Endothelial cell of umbilical vein (primary cell): ENCODE measurements at regions of chr1 and their contacts with region 1.

Region 1: DNA sequence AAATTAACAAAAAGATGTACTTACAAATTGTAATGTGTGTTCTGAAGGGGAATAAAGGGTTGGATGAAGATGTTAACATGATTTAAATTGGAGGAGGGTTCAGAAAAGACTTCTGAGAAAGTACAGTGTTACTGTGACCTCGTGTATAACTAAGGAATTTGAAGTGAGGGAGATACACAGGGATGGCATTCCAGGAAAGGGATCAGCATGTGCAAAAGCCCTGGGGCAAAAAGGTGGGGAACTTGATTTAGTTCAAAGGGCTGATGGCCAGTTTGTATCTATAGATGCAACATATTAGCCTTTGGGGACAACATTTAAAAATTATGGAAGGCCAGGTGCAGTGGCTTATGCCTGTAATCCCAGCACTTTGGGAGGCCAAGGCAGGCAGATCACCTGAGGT is 33.3 kb upstream of the DEGS1 start:
- DNase-seq: no peak
- H3K4me3 ChIP-seq: no peak overlapping the region
- H3K27ac ChIP-seq: no peak overlapping the region
- H3K4me1 ChIP-seq: no peaks in the 10 kb centered on the region
- H3K27me3 ChIP-seq: no peaks in the 10 kb centered on the region
- CTCF ChIP-seq: no peak
- POLR2A ChIP-seq: no peak

Region 2: GRCh38 chr1:224168859-224169380 is 19.2 kb after region 1 on chr1:
- CTCF ChIA-PET with region 1: interaction called, 11 read pairs
- POLR2A ChIA-PET with region 1: no interaction called
- dilution Hi-C with region 1: no loop called
- intact Hi-C with region 1: no loop called
- DNase-seq: peak; percentile 94
- H3K4me3 ChIP-seq: peak overlapping the region in 1 of 3 experiments; percentile 27
- H3K27ac ChIP-seq: peak overlapping the region; percentile 45
- H3K4me1 ChIP-seq: peaks cover 15% of the 10 kb centered on the region
- H3K27me3 ChIP-seq: peaks cover 0 to 3% of the 10 kb centered on the region in 2 experiments
- CTCF ChIP-seq: no peak
- POLR2A ChIP-seq: no peak